Heart right ventricle (tissue), 16 donors: ENCODE measurements at regions of chr15 and their contacts with region 1.

Region 1: GRCh38 chr15:80970018-80970658 is 19.5 kb downstream of the MESD start:
- DNase-seq: peak; percentile 33 to 69
- ATAC-seq: peak in 7 of 8 donors; percentile 46 to 83 (median 74)
- H3K4me3 ChIP-seq: no peak overlapping the region
- H3K27ac ChIP-seq: no peak overlapping the region
- H3K4me1 ChIP-seq: peaks cover 0 to 15% (median 0%) of the 10 kb centered on the region in 9 donors
- H3K27me3 ChIP-seq: no peaks in the 10 kb centered on the region
- CTCF ChIP-seq: peak; percentile 76 to 97 (median 91)

Region 2: GRCh38 chr15:80567721-80568157 is 402.4 kb before region 1 on chr15:
- intact Hi-C with region 1: loop called in 9 of 10 experiments (anchors 1 to 5 kb)
- DNase-seq: peak in 1 of 2 donors; percentile 64
- ATAC-seq: peak; percentile 63 to 88 (median 83)
- H3K4me3 ChIP-seq: no peak overlapping the region
- H3K27ac ChIP-seq: no peak overlapping the region
- H3K4me1 ChIP-seq: peaks cover 0 to 8% (median 0%) of the 10 kb centered on the region in 9 donors
- H3K27me3 ChIP-seq: peaks cover 0 to 9% (median 0%) of the 10 kb centered on the region in 7 donors
- CTCF ChIP-seq: peak; percentile 41 to 80 (median 71)

Region 3: GRCh38 chr15:80695104-80695910 is 274.8 kb before region 1 on chr15 and contains the start of gene ABHD17C:
- intact Hi-C with region 1: loop called in 1 of 10 experiments (anchors 10 kb)
- DNase-seq: peak; percentile 39 to 75
- ATAC-seq: peak; percentile 63 to 90 (median 85)
- H3K4me3 ChIP-seq: peak within 1 kb of the TSS; percentile 63 to 93 (median 78)
- H3K27ac ChIP-seq: peak within 1 kb of the TSS; percentile 57 to 91 (median 84)
- H3K4me1 ChIP-seq: peaks cover 0 to 28% (median 20%) of the 10 kb centered on the region in 9 donors
- H3K27me3 ChIP-seq: no peaks in the 10 kb centered on the region
- CTCF ChIP-seq: no peak
- total RNA-seq, gene ABHD17C: 3.4 to 8.5 (median 4.6) TPM